ENCODE measurements at regions of chr15 and their contacts with region 1.

Region 1: GRCh38 chr15:37134699-37135131 is 34.4 kb upstream of the MEIS2 start:
- DNase-seq: no peak
- H3K4me3 ChIP-seq: no peak overlapping the region
- H3K27ac ChIP-seq: no peak overlapping the region
- H3K4me1 ChIP-seq: no peaks in the 10 kb centered on the region
- H3K27me3 ChIP-seq: no peaks in the 10 kb centered on the region
- CTCF ChIP-seq: peak; percentile 32 to 76 (median 66)
- POLR2A ChIP-seq: no peak

Region 2: DNA sequence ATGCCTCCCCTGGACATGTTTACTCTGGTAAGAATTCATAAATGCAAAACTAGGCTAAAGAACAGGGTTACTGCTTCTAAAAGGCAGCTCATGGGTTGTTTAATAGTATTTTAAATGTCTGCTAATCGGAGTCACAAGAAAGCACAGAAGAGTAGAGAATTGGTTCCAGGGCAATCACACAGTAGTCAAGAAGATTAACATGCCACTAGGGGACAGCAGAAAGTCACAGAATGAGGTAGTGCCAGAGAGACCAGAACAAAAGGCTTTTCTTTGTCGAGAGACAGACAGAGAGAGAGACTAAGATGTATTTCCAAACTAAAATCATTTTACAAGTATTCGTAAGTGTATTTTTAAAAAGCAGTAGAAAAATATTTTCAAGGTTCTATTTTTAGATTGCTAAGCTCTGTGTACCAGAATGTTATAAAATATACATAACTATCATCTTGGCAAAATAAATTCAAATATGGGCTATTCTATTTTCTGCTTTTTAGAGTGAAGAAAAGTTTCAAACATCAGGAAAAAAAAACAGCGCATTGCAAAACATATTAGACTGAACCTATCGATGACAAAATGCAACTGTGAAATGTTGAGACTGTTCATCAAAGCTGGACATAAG is 633.5 kb before region 1 on chr15:
- intact Hi-C with region 1: loop called (anchors 10 kb)
- DNase-seq: peak; percentile 46
- H3K4me3 ChIP-seq: no peak overlapping the region
- H3K27ac ChIP-seq: no peak overlapping the region
- H3K4me1 ChIP-seq: no peaks in the 10 kb centered on the region
- H3K27me3 ChIP-seq: no peaks in the 10 kb centered on the region
- CTCF ChIP-seq: peak; percentile 41 to 71 (median 58)
- POLR2A ChIP-seq: no peak

Region 3: DNA sequence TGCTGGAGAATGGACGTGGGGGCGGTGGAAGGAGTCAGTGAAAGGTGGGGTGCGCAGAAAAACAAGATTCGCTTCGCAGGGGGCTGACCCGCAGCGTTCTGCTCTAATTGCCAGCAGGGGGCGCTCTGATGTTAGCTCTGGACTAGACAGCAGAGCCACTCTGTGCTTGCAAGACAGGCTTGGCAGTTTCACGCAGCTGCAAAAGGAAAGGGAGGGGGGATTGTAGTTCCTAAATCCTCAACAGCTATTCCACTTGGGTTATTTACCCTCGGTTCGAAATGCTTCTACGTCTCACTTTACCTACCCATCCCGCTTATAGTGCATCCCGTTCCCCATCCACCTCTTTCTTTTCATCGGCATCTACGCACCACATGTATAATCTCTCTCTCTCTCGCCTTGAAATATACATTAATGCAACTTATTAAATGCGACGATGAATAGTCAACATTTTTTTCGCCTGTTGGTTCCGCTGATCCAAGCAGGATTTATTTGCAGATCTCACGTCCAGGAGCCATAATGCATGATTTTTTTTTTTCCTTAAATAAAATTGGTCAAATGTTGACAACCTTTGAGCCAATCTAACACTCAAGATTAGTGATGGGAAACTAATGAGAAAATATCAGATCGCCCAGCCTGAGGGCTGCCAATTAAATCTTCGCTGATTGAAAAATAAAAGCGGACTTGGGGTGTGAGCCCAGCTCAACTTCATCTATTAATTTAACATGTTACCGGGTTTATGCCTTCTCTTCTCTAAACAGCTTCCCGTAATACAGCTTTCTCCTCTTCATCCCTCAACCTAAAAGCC is 250.8 kb before region 1 on chr15:
- intact Hi-C with region 1: loop called (anchors 2 kb)
- DNase-seq: peak; percentile 92
- H3K4me3 ChIP-seq: peak overlapping the region; percentile 19 to 27
- H3K27ac ChIP-seq: peak overlapping the region; percentile 54 to 73
- H3K4me1 ChIP-seq: peaks cover 3% of the 10 kb centered on the region
- H3K27me3 ChIP-seq: no peaks in the 10 kb centered on the region
- CTCF ChIP-seq: peak; percentile 74 to 93 (median 86)
- POLR2A ChIP-seq: no peak

Measured in prostate gland (tissue), 2 donors.